Posterior vena cava (tissue), 2 donors: ENCODE measurements at regions of chr2 and their contacts with region 1.

Region 1: GRCh38 chr2:205012961-205013360 is 467.7 kb downstream of the PARD3B start:
- DNase-seq: no peak

Region 2: DNA sequence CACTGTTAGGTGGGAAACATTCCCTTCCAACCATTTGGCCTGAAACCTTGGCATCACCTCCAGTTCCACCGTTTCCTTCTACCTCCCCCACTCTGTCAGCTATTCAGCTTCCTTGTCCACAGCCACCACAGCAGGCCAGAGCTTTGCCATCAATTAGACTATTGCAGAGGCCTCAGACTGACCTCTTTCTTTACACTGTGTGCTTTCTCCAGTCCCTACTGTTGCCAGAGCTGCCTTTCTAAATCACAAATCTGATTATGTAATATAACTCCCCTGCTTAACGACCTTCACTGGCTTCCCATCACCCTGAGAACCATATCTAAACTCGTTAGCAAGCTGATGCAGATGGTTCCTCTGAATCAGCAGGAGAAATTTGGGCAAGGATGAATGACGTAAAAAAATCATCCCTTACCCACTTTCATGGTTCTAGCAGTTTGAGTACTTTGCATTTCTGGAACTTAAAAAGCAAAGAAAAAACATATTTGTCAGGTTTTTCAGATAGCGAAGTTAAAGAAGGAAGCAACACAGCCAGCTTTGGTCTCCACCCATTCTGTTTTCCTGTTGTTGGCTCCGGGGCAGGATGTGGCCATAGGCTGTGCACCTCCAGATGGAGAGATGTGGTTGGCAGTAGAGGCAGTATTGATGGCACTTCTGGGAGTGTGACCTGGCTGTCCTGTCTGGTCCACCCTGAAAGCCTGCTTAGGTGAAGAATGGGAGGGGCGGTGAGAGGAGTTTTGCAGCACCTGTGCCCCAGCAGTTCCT is 45.6 kb before region 1 on chr2:
- intact Hi-C with region 1: no loop called
- DNase-seq: peak; percentile 71

Region 3: DNA sequence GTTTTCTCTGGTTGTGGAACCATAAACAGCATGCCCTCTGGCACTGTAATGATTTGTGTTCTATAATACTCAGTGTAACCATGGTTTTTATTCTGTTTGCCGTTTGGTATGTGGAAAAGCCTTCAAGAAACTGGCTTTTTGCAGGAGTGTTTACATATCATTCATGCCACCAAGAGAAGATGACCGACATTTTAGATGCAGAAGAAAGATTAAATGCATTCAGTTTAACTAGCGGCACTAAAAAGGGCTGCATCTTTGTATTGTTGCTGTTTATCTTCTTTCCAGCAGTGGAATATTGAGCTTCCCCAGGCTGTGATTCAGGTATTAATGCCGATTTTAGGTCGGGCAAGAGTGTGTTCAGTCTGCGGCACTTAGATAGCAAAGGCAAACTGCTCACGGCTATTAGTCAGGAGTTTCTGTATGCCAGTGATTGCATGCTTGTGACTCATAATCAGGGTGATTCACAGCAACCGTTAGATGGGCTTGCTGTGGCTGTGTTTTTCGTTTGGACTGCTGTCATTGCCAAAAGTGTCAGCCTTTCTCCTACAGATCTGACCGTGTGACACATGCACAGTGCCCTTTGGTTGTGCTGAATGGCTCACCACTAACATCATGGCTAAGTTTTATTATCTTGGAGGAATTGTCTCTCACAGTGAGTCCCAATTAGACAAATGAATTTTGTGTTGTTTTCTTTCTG is 12.0 kb after region 1 on chr2:
- intact Hi-C with region 1: loop called in 1 of 2 experiments (anchors 1 kb)
- DNase-seq: peak; percentile 84

Region 4: GRCh38 chr2:205220559-205220958 is 207.6 kb after region 1 on chr2:
- intact Hi-C with region 1: loop called in 1 of 2 experiments (anchors 5 kb)
- DNase-seq: no peak